ENCODE measurements at regions of chr15 and their contacts with region 1.

Region 1: DNA sequence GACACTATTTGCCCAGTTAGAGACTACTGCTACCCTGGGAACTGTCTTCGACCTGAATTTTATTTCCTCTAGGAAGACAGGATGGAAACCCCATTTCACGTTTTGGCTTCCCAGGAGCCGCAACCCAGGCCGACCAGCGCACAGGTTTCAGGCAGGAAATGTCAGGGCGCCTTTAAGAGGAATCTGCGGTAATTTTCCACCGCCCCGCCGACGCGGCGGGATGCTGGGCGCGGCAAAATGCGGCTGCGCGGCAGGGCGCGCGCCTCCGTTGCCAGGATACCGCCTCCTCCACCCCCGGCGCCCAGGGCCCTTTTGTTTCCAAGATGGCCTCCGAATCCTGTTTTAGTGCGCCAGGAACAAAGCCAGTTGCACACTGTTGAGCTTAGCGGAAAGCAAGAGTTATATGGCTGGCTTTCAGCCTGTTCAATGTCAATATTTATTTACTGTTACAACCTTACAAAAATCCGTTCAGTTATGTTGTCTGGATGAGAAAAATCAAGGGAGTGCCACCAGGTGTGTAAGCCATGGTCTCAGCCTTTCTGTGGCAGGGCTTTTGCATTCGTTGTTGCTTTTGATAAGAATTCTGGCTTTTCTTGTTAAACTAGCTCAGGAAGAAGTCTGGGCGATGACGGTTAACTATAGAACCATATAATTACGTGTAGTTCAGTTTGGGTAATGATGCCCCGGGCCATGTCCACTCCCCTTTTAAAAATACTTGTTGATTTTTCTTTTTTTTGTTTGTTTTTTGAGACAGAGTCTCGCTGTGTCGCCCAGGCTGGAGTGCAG is 79.7 kb upstream of the CHD2 start:
- DNase-seq: peak; percentile 74 to 90 (median 86)
- ATAC-seq: peak; percentile 95
- H3K4me3 ChIP-seq: peak overlapping the region; percentile 76
- H3K4me3 Mint-ChIP-seq: peak overlapping the region; percentile 63 to 93 (median 88)
- H3K27ac ChIP-seq: peak overlapping the region; percentile 86
- H3K27ac Mint-ChIP-seq: peak overlapping the region; percentile 78 to 98 (median 91)
- H3K4me1 ChIP-seq: peaks cover 16 to 47% of the 10 kb centered on the region in 2 donors
- H3K4me1 Mint-ChIP-seq: peaks cover 25 to 74% (median 70%) of the 10 kb centered on the region in 7 donors
- H3K27me3 ChIP-seq: no peaks in the 10 kb centered on the region
- H3K27me3 Mint-ChIP-seq: no peaks in the 10 kb centered on the region

Region 2: GRCh38 chr15:91807122-91807521 is 1013.3 kb before region 1 on chr15:
- CTCF ChIA-PET with region 1: no interaction called
- POLR2A ChIA-PET with region 1: no interaction called
- intact Hi-C with region 1: no loop called
- DNase-seq: no peak
- ATAC-seq: no peak
- H3K4me3 ChIP-seq: no peak overlapping the region
- H3K4me3 Mint-ChIP-seq: no peak overlapping the region
- H3K27ac ChIP-seq: no peak overlapping the region
- H3K27ac Mint-ChIP-seq: no peak overlapping the region
- H3K4me1 ChIP-seq: no peaks in the 10 kb centered on the region
- H3K4me1 Mint-ChIP-seq: peaks cover 0 to 1% (median 0%) of the 10 kb centered on the region in 7 donors
- H3K27me3 ChIP-seq: no peaks in the 10 kb centered on the region
- H3K27me3 Mint-ChIP-seq: peaks cover 6 to 18% (median 7%) of the 10 kb centered on the region in 5 donors

Region 3: DNA sequence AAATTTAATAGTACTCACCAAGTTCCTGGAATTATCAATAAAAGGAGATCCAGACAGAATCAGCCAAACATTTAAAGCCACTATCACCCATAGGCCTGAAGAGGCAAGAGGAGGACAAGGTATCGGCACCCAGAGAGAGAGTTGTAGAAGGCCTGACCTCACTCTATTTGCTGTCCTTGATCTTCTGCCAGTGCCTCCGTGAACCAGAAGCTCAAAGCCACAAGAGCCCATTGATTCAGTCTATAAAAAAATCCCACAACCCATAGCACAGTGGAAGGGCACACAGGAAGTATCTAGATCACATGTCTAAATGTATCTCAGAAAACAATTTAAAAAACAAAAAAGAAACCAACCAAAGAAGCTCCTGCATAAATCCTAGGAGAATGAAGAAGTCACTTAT is 96.3 kb before region 1 on chr15:
- CTCF ChIA-PET with region 1: no interaction called
- POLR2A ChIA-PET with region 1: no interaction called
- intact Hi-C with region 1: no loop called
- DNase-seq: peak in 5 of 9 donors; percentile 3 to 59 (median 41)
- ATAC-seq: no peak
- H3K4me3 ChIP-seq: no peak overlapping the region
- H3K4me3 Mint-ChIP-seq: peak overlapping the region in 3 of 10 donors; percentile 1 to 64 (median 19)
- H3K27ac ChIP-seq: no peak overlapping the region
- H3K27ac Mint-ChIP-seq: peak overlapping the region in 3 of 9 donors; percentile 2 to 59 (median 43)
- H3K4me1 ChIP-seq: peaks cover 0 to 5% of the 10 kb centered on the region in 2 donors
- H3K4me1 Mint-ChIP-seq: peaks cover 4 to 24% (median 11%) of the 10 kb centered on the region in 7 donors
- H3K27me3 ChIP-seq: no peaks in the 10 kb centered on the region
- H3K27me3 Mint-ChIP-seq: peaks cover 0 to 10% (median 5%) of the 10 kb centered on the region in 5 donors

Region 4: DNA sequence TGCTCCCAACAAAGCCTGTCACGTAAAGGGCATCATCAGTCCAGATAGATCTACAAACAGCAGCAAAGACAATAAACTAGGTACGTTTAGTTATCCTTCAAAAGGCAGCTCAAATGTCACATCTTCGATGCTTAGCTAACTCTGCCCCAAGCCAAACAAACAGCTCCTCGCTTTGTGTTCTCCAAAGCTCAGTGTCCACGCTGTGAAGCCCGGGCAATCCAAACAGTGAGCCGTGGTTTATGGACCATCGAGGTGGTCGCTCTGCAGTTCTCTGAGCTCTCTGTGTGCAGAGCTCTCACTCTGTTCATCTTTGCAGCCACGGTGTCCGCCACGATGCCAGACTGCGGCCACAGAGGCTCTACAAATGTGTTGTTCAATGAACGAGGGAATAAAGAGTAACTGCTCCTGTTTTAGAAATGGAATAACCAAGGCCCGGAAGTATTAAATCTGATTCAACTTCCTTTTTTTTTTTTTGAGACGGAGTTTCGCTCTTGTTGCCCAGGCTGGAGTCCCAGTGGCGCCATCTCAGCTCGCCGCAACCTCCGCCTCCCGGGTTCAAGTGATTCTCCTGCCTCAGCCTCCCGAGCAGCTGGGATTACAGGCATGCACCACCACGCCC is 47.7 kb before region 1 on chr15:
- CTCF ChIA-PET with region 1: no interaction called
- POLR2A ChIA-PET with region 1: no interaction called
- intact Hi-C with region 1: no loop called
- DNase-seq: no peak
- ATAC-seq: no peak
- H3K4me3 ChIP-seq: no peak overlapping the region
- H3K4me3 Mint-ChIP-seq: no peak overlapping the region
- H3K27ac ChIP-seq: no peak overlapping the region
- H3K27ac Mint-ChIP-seq: no peak overlapping the region
- H3K4me1 ChIP-seq: no peaks in the 10 kb centered on the region
- H3K4me1 Mint-ChIP-seq: no peaks in the 10 kb centered on the region
- H3K27me3 ChIP-seq: no peaks in the 10 kb centered on the region
- H3K27me3 Mint-ChIP-seq: no peaks in the 10 kb centered on the region

Region 5: GRCh38 chr15:92845126-92845508 is 24.7 kb after region 1 on chr15:
- CTCF ChIA-PET with region 1: interaction called, 4 read pairs
- POLR2A ChIA-PET with region 1: interaction called, 12 read pairs
- intact Hi-C with region 1: loop called in 1 of 2 experiments (anchors 1 kb)
- DNase-seq: peak in 7 of 9 donors; percentile 66 to 83 (median 73)
- ATAC-seq: peak; percentile 66
- H3K4me3 ChIP-seq: peak overlapping the region; percentile 11
- H3K4me3 Mint-ChIP-seq: peak overlapping the region; percentile 56 to 95 (median 82)
- H3K27ac ChIP-seq: peak overlapping the region; percentile 72
- H3K27ac Mint-ChIP-seq: peak overlapping the region; percentile 93 to 99 (median 97)
- H3K4me1 ChIP-seq: peaks cover 21 to 78% of the 10 kb centered on the region in 2 donors
- H3K4me1 Mint-ChIP-seq: peaks cover 41 to 91% (median 81%) of the 10 kb centered on the region in 7 donors
- H3K27me3 ChIP-seq: no peaks in the 10 kb centered on the region
- H3K27me3 Mint-ChIP-seq: no peaks in the 10 kb centered on the region

Region 6: GRCh38 chr15:92889390-92890107 is 69.1 kb after region 1 on chr15:
- CTCF ChIA-PET with region 1: interaction called, 3 read pairs
- POLR2A ChIA-PET with region 1: interaction called, 362 read pairs
- intact Hi-C with region 1: no loop called
- DNase-seq: peak in 1 of 9 donors; percentile 7
- ATAC-seq: peak; percentile 33
- H3K4me3 ChIP-seq: no peak overlapping the region
- H3K4me3 Mint-ChIP-seq: peak overlapping the region; percentile 56 to 84 (median 73)
- H3K27ac ChIP-seq: peak overlapping the region; percentile 61
- H3K27ac Mint-ChIP-seq: peak overlapping the region; percentile 78 to 92 (median 85)
- H3K4me1 ChIP-seq: peaks cover 60 to 66% of the 10 kb centered on the region in 2 donors
- H3K4me1 Mint-ChIP-seq: peaks cover 47 to 92% (median 75%) of the 10 kb centered on the region in 7 donors
- H3K27me3 ChIP-seq: no peaks in the 10 kb centered on the region
- H3K27me3 Mint-ChIP-seq: no peaks in the 10 kb centered on the region

Region 7: DNA sequence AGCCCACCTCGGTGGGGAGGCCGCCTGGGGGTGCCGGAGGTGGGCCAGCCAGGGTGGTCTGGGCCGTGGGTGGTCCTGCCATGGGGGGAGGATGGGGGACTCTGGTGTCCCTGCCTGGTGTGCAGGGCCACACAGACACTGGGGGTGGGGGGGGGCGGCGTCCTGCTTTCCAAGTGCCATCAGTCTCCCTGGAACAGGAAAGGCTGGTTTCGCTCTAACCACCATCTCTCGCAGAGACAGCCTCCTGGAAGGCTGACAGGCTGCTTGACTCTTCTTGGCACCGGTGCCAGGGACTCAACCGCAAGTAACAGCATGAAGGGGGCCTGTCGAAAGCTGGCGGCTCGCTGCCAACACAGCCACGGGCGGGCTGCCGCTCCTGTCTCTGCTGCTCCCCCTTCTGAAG is 228.3 kb after region 1 on chr15:
- CTCF ChIA-PET with region 1: no interaction called
- POLR2A ChIA-PET with region 1: no interaction called
- intact Hi-C with region 1: no loop called
- DNase-seq: no peak
- ATAC-seq: no peak
- H3K4me3 ChIP-seq: no peak overlapping the region
- H3K4me3 Mint-ChIP-seq: peak overlapping the region in 3 of 10 donors; percentile 1 to 50 (median 20)
- H3K27ac ChIP-seq: no peak overlapping the region
- H3K27ac Mint-ChIP-seq: no peak overlapping the region
- H3K4me1 ChIP-seq: peaks cover 17 to 39% of the 10 kb centered on the region in 2 donors
- H3K4me1 Mint-ChIP-seq: peaks cover 6 to 40% (median 32%) of the 10 kb centered on the region in 7 donors
- H3K27me3 ChIP-seq: no peaks in the 10 kb centered on the region
- H3K27me3 Mint-ChIP-seq: peaks cover 0 to 6% (median 0%) of the 10 kb centered on the region in 5 donors

Measured in naive thymus-derived CD4-positive, alpha-beta T cell (primary cell).